Activated T-helper 1 cell treated with anti-CD3 and anti-CD28 coated beads, Interleukin-12 subunit alpha, Interleukin-12 subunit beta, Interleukin-2, Interleukin-4 antibody, amounts not matched to agents 30 ng/mL and 10 ng/mL and 1 ng/mL, durations not matched to agents 14 hours and 24 hours and 36 hours (primary cell): ENCODE measurements at regions of chr6 and their contacts with region 1.

Region 1: GRCh38 chr6:10404107-10404798 is 10.6 kb downstream of the TFAP2A start:
- DNase-seq: peak; percentile 89
- H3K4me3 Mint-ChIP-seq: peak overlapping the region; percentile 82
- H3K27ac Mint-ChIP-seq: peak overlapping the region; percentile 73
- H3K4me1 Mint-ChIP-seq: peaks cover 11% of the 10 kb centered on the region
- H3K27me3 Mint-ChIP-seq: peaks cover 71% of the 10 kb centered on the region

Region 2: DNA sequence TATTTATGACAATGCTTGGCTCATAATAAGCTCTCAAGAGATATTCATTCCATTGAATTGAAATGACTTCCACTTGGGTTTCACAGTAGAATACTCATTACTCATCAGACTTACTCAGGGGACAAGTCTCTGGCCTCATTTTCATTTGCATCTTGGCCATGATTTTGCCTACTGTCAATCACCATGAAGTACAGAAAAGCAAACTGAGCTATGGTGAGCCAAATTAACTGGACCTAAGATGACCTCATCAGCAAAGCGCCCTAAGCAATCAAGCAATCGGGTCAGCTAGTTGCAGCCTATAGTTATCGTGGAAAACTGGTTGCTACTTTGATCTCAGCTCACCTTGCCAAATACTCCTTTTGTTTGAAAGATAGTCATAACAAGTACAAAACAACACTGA is 1474.2 kb before region 1 on chr6:
- intact Hi-C with region 1: no loop called
- DNase-seq: no peak
- H3K4me3 Mint-ChIP-seq: no peak overlapping the region
- H3K27ac Mint-ChIP-seq: no peak overlapping the region
- H3K4me1 Mint-ChIP-seq: no peaks in the 10 kb centered on the region
- H3K27me3 Mint-ChIP-seq: peaks cover 3% of the 10 kb centered on the region

Region 3: DNA sequence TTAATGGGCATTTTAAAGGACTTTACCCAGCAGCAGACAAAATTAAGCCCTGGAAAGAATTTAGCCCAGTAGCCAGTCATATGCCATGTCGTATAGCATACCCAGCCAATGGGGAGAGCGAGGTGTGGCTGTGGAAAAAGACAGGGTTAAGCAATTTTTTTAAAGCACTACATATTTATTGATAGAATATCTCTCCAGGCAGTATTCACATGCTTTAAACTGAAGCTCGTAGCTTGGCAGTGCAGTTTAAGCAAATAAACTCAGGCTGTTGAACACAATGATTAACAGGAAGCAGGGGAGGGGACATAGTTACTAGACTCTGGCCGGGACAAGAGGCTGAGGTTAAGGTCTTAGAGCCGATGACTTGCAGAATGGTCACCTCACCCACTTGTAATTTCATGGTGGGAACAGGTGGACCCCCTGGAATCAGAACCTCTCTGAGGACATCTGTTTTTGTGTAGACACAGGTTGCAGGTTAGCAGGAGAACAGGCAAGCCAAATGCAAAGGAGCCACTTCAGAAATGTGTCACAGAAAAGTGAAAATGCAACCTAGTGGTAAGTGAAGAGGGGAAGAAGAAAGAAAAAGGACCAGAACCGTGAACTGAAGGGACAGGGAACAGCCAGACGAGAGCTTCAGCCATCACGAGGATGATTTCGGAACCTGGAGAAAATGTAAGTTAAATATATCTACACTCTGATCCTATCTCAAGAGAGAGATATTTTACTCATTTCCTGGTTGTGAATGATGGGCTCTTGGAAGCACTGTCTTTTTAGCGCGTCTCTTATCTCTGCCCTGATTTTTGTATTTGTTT is 124.1 kb after region 1 on chr6:
- intact Hi-C with region 1: loop called (anchors 5 kb)
- DNase-seq: peak; percentile 41
- H3K4me3 Mint-ChIP-seq: peak overlapping the region; percentile 87
- H3K27ac Mint-ChIP-seq: peak overlapping the region; percentile 64
- H3K4me1 Mint-ChIP-seq: peaks cover 48% of the 10 kb centered on the region
- H3K27me3 Mint-ChIP-seq: peaks cover 5% of the 10 kb centered on the region

Region 4: DNA sequence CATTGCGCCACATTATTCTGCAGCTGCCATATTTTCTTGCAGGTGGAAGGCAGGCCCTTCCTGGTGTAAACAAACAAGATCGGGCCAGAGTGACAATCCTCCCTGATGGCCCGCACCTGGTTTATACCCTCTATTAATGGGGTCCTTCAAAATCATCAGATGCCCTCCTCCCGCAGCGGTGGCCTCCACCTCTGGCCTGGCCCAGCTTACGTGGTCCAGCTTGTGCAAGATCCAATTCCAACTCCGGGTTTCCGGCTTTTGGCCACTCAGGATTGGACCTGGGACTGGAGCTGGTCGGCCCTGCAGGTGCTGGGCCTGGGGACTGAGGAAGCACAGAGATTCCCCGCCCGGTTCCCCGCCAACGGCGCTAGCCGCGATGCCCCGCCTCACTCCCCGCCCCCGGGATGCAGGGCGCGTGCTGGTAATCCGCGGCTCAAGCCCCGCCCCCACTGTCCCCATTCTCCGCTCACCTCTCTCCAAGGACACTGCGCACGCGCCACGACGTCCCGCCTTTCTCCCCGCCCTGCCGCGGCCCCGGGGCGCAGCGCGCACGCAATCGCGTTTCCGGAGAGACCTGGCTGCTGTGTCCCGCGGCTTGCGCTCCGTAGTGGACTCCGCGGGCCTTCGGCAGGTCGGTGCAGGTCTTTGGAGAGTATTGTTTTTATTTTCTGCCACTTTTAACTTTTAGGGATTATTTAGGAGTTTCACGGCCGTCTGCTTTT is 343.2 kb after region 1 on chr6 and contains the start of gene TMEM14B:
- intact Hi-C with region 1: loop called (anchors 1 kb)
- DNase-seq: peak; percentile 100
- H3K4me3 Mint-ChIP-seq: peak within 1 kb of the TSS; percentile 93
- H3K27ac Mint-ChIP-seq: peak within 1 kb of the TSS; percentile 94
- H3K4me1 Mint-ChIP-seq: peaks cover 52% of the 10 kb centered on the region
- H3K27me3 Mint-ChIP-seq: no peaks in the 10 kb centered on the region
- total RNA-seq, gene TMEM14B: 82.1 and 83.7 TPM in 2 replicates

Region 5: GRCh38 chr6:11043961-11044711 is 639.9 kb after region 1 on chr6 and contains the start of gene ELOVL2:
- intact Hi-C with region 1: loop called (anchors 10 kb)
- DNase-seq: peak; percentile 5
- H3K4me3 Mint-ChIP-seq: peak within 1 kb of the TSS; percentile 76
- H3K27ac Mint-ChIP-seq: peak within 1 kb of the TSS; percentile 50
- H3K4me1 Mint-ChIP-seq: peaks cover 8% of the 10 kb centered on the region
- H3K27me3 Mint-ChIP-seq: peaks cover 69% of the 10 kb centered on the region
- total RNA-seq, gene ELOVL2: not detected in 2 replicates

Region 6: DNA sequence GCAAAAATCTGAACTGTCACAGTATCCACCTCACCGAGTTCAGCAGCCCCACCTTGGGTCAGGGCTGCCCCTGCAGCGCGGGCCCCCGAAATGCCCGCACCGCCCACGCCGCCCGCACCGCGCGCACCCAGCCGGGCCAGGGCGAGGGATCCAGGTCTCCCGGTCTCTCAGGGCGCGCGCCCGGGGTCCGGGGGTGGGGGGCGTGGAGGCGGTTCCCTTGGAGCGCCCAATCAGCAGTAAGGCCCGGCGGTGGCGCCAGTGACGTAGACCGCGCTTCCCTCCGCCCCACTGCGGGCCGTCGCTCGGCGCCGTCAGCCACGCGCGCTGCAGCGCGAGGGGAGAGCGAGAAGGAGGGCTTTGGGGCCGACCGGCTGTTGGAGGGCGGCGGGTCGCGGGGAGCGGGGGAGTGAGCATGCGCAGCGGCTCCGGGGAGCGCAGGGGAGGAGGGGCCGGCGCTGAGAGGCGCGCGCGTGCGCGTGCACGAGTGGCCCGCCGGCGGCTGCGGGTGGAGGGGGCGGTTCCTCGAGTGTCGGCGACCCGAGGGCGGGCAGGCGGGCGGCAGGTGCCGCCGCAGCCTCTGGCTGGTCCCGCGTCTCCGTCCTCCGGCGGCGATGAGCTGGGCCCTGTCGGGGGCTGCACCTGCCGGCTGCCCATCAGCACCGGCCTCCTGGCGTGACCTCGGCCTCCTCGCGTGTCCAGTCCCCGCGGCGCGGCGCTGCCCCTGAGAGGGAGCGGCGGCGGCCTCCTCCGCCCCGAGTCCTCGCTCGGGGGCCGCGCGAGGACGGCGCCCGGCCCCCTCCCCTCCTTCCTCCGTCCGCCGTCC is 1133.2 kb after region 1 on chr6 and contains the start of gene TMEM170B:
- intact Hi-C with region 1: loop called (anchors 2 kb)
- DNase-seq: peak; percentile 90
- H3K4me3 Mint-ChIP-seq: peak within 1 kb of the TSS; percentile 84
- H3K27ac Mint-ChIP-seq: peak within 1 kb of the TSS; percentile 68
- H3K4me1 Mint-ChIP-seq: peaks cover 17% of the 10 kb centered on the region
- H3K27me3 Mint-ChIP-seq: peaks cover 62% of the 10 kb centered on the region
- total RNA-seq, gene TMEM170B: 0.78 and 0.86 TPM in 2 replicates